Left cardiac atrium (tissue), 4 donors: ENCODE measurements at regions of chr12 and their contacts with region 1.

Region 1: GRCh38 chr12:67648521-67649260 is at the start of gene DYRK2:
- DNase-seq: peak; percentile 88
- ATAC-seq: peak; percentile 73 to 79
- total RNA-seq, gene DYRK2: 61.7 to 67.4 TPM

Region 2: DNA sequence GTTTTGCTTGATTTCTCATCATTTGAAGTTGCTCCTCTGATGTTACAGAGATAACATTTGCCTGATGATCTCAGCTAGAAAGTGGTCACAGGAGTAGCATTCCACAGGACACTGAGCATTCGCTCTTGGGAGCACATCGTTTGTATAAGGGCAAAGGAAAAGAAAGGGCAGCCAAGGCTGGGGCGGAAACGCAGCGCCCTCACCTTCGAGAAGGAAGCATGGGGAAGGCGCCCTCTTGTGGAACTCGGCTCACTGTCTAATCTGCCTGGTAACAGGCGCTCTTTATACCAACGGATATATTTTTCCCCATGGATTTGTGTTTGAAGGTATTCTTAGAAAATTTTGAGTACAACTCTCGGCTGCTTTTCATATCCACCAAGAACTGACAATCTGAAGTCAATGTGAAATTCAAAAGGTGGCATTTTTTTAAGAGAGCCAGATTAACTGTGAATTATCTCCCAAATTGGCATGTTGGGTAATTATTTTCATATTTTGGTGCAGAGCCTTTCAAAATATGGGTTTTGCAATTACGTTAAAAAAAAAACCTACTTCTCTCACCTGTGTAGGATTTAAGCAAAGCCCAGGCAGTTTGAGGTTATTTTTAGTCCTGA is 206.8 kb before region 1 on chr12:
- intact Hi-C with region 1: loop called (anchors 5 kb)
- DNase-seq: peak; percentile 89
- ATAC-seq: peak; percentile 96 to 98

Region 3: GRCh38 chr12:67710582-67710981 is 61.9 kb after region 1 on chr12:
- intact Hi-C with region 1: loop called in 1 of 2 experiments (anchors 5 kb)
- DNase-seq: no peak
- ATAC-seq: peak; percentile 38 to 71

Region 4: GRCh38 chr12:67772276-67773169 is 123.8 kb after region 1 on chr12:
- intact Hi-C with region 1: loop called in 1 of 2 experiments (anchors 10 kb)
- DNase-seq: no peak
- ATAC-seq: peak; percentile 99